ENCODE measurements at regions of chr20 and their contacts with region 1.

Region 1: GRCh38 chr20:4813863-4814695 is 92.4 kb downstream of the PRND start:
- DNase-seq: peak in 1 of 2 donors; percentile 66
- H3K4me3 ChIP-seq: no peak overlapping the region
- H3K27ac ChIP-seq: peak overlapping the region; percentile 50 to 54
- H3K4me1 ChIP-seq: peaks cover 0 to 17% (median 3%) of the 10 kb centered on the region in 4 donors
- H3K27me3 ChIP-seq: no peaks in the 10 kb centered on the region
- CTCF ChIP-seq: no peak

Region 2: DNA sequence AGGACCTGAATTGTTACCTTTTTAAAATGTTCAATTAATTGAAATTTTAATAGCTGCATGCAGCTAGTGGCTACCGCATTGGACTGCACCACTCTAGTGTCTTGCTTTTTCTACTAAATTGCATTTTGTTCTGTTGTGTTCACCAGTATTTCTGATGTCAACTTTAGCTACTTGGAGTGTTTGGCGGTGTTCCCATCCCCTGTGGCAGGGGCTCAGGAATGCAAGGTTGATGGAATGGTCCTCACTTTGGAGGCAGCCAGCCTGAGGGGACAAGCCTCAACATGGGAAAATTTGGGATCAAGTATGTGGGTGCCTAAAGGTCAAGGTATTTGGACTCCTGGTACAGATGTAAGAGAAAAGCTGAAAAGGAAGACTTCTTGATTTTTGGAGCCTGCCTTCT is 322.4 kb before region 1 on chr20:
- intact Hi-C with region 1: no loop called
- DNase-seq: no peak
- H3K4me3 ChIP-seq: no peak overlapping the region
- H3K27ac ChIP-seq: no peak overlapping the region
- H3K4me1 ChIP-seq: peaks cover 0 to 30% (median 6%) of the 10 kb centered on the region in 4 donors
- H3K27me3 ChIP-seq: no peaks in the 10 kb centered on the region
- CTCF ChIP-seq: no peak

Region 3: GRCh38 chr20:4765681-4766080 is 48.4 kb before region 1 on chr20:
- intact Hi-C with region 1: loop called (anchors 1 kb)
- DNase-seq: no peak
- H3K4me3 ChIP-seq: no peak overlapping the region
- H3K27ac ChIP-seq: no peak overlapping the region
- H3K4me1 ChIP-seq: peaks cover 0 to 7% (median 3%) of the 10 kb centered on the region in 4 donors
- H3K27me3 ChIP-seq: no peaks in the 10 kb centered on the region
- CTCF ChIP-seq: no peak

Region 4: DNA sequence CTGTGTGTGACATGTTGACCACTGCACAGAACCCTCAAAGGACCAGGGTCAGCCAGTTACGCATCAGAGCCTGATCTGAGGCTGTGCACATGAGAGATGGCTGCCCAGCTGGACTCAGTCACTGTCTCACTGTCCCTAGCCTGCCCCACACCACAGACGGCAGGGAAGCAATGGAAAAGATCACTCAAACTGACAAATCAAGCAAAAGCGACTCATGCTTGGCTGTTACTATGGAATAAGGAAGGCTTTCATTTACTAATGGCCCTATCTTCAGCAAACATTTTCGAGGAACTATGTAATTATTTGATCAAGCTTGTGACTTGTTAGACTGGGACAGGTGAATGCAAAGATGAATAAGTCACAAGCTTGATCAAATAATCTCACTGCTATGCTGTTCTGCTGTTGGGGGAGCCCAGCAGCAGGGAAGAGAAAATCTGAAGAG is 50.3 kb after region 1 on chr20:
- intact Hi-C with region 1: loop called (anchors 2 kb)
- DNase-seq: no peak
- H3K4me3 ChIP-seq: no peak overlapping the region
- H3K27ac ChIP-seq: no peak overlapping the region
- H3K4me1 ChIP-seq: no peaks in the 10 kb centered on the region
- H3K27me3 ChIP-seq: no peaks in the 10 kb centered on the region
- CTCF ChIP-seq: no peak

Region 5: GRCh38 chr20:5448449-5449118 is 634.5 kb after region 1 on chr20:
- intact Hi-C with region 1: no loop called
- DNase-seq: peak in 1 of 2 donors; percentile 33
- H3K4me3 ChIP-seq: no peak overlapping the region
- H3K27ac ChIP-seq: no peak overlapping the region
- H3K4me1 ChIP-seq: no peaks in the 10 kb centered on the region
- H3K27me3 ChIP-seq: no peaks in the 10 kb centered on the region
- CTCF ChIP-seq: peak; percentile 45 to 49